Ovary (tissue), 10 donors: ENCODE measurements at regions of chr9 and their contacts with region 1.

Region 1: GRCh38 chr9:38127271-38127882 is 58.4 kb upstream of the SHB start:
- DNase-seq: no peak
- H3K4me3 ChIP-seq: no peak overlapping the region
- H3K27ac ChIP-seq: no peak overlapping the region
- H3K4me1 ChIP-seq: no peaks in the 10 kb centered on the region
- H3K27me3 ChIP-seq: no peaks in the 10 kb centered on the region
- CTCF ChIP-seq: no peak
- EP300 ChIP-seq: no peak
- POLR2A ChIP-seq: no peak

Region 2: GRCh38 chr9:37740636-37741328 is 386.6 kb before region 1 on chr9:
- intact Hi-C with region 1: no loop called
- DNase-seq: no peak
- H3K4me3 ChIP-seq: no peak overlapping the region
- H3K27ac ChIP-seq: no peak overlapping the region
- H3K4me1 ChIP-seq: no peaks in the 10 kb centered on the region
- H3K27me3 ChIP-seq: no peaks in the 10 kb centered on the region
- CTCF ChIP-seq: no peak
- EP300 ChIP-seq: no peak
- POLR2A ChIP-seq: no peak

Region 3: GRCh38 chr9:38164659-38165221 is 37.4 kb after region 1 on chr9:
- intact Hi-C with region 1: loop called in 1 of 4 experiments (anchors 5 kb)
- DNase-seq: no peak
- H3K4me3 ChIP-seq: no peak overlapping the region
- H3K27ac ChIP-seq: no peak overlapping the region
- H3K4me1 ChIP-seq: no peaks in the 10 kb centered on the region
- H3K27me3 ChIP-seq: no peaks in the 10 kb centered on the region
- CTCF ChIP-seq: no peak
- EP300 ChIP-seq: no peak
- POLR2A ChIP-seq: no peak

Region 4: GRCh38 chr9:38183994-38184568 is 56.7 kb after region 1 on chr9:
- intact Hi-C with region 1: loop called in 1 of 4 experiments (anchors 10 kb)
- DNase-seq: no peak
- H3K4me3 ChIP-seq: no peak overlapping the region
- H3K27ac ChIP-seq: no peak overlapping the region
- H3K4me1 ChIP-seq: no peaks in the 10 kb centered on the region
- H3K27me3 ChIP-seq: no peaks in the 10 kb centered on the region
- CTCF ChIP-seq: no peak
- EP300 ChIP-seq: no peak
- POLR2A ChIP-seq: no peak

Region 5: GRCh38 chr9:38194870-38195269 is 67.5 kb after region 1 on chr9:
- intact Hi-C with region 1: no loop called
- DNase-seq: no peak
- H3K4me3 ChIP-seq: no peak overlapping the region
- H3K27ac ChIP-seq: no peak overlapping the region
- H3K4me1 ChIP-seq: no peaks in the 10 kb centered on the region
- H3K27me3 ChIP-seq: no peaks in the 10 kb centered on the region
- CTCF ChIP-seq: no peak
- EP300 ChIP-seq: no peak
- POLR2A ChIP-seq: no peak